ENCODE measurements at regions of chr17 and their contacts with region 1.

Region 1: GRCh38 chr17:29401258-29401657 is 11.1 kb downstream of the TAOK1 start:
- DNase-seq: no peak
- ATAC-seq: no peak
- H3K4me3 ChIP-seq: no peak overlapping the region
- H3K27ac ChIP-seq: no peak overlapping the region
- H3K4me1 ChIP-seq: no peaks in the 10 kb centered on the region
- H3K27me3 ChIP-seq: no peaks in the 10 kb centered on the region
- CTCF ChIP-seq: no peak

Region 2: GRCh38 chr17:29378500-29378899 is 22.8 kb before region 1 on chr17:
- CTCF ChIA-PET with region 1: interaction called, 10 read pairs
- POLR2A ChIA-PET with region 1: no interaction called
- intact Hi-C with region 1: no loop called
- DNase-seq: no peak
- ATAC-seq: no peak
- H3K4me3 ChIP-seq: no peak overlapping the region
- H3K27ac ChIP-seq: no peak overlapping the region
- H3K4me1 ChIP-seq: no peaks in the 10 kb centered on the region; the same call in 1 of the 2 replicates
- H3K27me3 ChIP-seq: no peaks in the 10 kb centered on the region
- CTCF ChIP-seq: no peak

Measured in PC-3 (cell line).